ENCODE measurements at regions of chr13 and their contacts with region 1.

Region 1: DNA sequence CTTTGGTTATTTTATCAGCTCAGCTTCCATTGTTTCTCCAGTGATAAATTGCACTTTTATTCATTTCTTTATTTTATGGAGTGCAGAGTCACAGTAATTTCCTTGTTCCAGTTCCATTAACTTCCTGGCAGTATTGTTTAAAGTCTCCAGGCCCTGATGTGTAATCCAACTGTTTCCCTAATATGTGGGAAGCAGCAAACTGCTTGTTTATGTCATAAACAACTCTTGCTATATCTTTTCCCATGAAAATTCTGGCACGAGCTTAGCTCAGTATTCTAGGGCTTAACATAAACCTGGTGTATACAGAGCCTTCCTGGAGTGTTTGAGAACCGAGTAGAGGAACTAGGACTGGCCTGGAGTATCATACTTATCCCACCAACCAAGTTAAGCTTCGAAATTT is 83.5 kb upstream of the ARGLU1 start:
- DNase-seq: no peak
- ATAC-seq: no peak
- H3K4me3 ChIP-seq: no peak overlapping the region
- H3K27ac ChIP-seq: peak overlapping the region; percentile 27
- H3K4me1 ChIP-seq: no peaks in the 10 kb centered on the region
- H3K27me3 ChIP-seq: no peaks in the 10 kb centered on the region
- CTCF ChIP-seq: no peak

Region 2: DNA sequence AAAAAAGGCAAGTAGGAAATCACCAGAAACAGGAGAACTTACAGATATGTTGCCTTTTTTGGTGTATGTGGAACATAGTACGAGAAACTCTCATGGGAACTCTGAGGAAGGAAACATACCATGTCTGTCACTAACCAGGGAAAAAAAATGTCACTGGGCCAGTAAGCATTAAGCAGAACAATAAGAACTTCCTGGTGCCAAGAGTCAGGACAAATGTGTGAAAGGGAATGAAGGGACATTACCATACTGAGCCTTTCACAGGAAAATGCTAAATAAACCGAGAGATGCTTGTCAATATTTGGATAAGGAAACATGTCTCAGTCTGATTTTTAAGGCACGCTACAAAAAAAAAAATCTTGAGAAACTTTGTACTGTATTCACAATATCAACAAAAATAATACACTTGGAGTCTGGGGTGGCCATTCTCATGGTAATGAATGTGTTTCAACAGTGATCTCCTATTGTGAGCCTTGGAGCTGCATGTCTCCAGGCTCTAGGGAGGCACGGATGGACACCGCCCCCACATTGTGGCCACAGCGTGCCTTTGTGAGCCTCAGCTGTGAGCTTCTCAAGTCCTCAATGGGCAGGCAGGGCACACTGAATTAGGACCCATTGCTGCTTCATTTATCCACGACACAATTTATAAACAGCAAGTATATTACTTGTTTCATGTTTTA is 29.5 kb after region 1 on chr13:
- intact Hi-C with region 1: loop called in 1 of 2 experiments (anchors 1 kb)
- DNase-seq: no peak
- ATAC-seq: no peak
- H3K4me3 ChIP-seq: no peak overlapping the region
- H3K27ac ChIP-seq: no peak overlapping the region
- H3K4me1 ChIP-seq: no peaks in the 10 kb centered on the region
- H3K27me3 ChIP-seq: no peaks in the 10 kb centered on the region
- CTCF ChIP-seq: no peak

Region 3: DNA sequence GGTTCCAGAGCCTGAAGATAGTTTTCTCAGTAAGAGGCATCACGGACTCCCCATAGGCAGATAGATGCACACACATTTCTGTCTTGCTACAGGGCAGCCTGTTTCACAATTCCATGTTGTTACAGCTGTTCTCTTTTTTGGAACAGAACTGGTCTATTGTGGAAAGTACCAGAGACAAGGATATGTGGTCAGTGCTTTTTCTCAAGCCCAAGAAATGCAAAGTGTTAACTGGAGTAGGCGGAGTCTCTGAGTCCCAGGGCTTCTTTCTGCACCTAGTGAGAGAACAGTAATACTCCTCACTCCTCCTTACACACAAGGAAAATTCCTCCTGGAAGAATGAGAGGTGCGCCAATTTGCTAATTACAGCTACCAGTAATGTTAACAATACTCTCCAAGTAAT is 58.1 kb after region 1 on chr13:
- intact Hi-C with region 1: no loop called
- DNase-seq: no peak
- ATAC-seq: peak in 3 of 4 donors; percentile 37 to 68 (median 67)
- H3K4me3 ChIP-seq: peak overlapping the region; percentile 32
- H3K27ac ChIP-seq: peak overlapping the region; percentile 60
- H3K4me1 ChIP-seq: no peaks in the 10 kb centered on the region
- H3K27me3 ChIP-seq: no peaks in the 10 kb centered on the region
- CTCF ChIP-seq: no peak

Measured in psoas muscle (tissue), 8 donors.